B cell (primary cell): ENCODE measurements at regions of chr7 and their contacts with region 1.

Region 1: DNA sequence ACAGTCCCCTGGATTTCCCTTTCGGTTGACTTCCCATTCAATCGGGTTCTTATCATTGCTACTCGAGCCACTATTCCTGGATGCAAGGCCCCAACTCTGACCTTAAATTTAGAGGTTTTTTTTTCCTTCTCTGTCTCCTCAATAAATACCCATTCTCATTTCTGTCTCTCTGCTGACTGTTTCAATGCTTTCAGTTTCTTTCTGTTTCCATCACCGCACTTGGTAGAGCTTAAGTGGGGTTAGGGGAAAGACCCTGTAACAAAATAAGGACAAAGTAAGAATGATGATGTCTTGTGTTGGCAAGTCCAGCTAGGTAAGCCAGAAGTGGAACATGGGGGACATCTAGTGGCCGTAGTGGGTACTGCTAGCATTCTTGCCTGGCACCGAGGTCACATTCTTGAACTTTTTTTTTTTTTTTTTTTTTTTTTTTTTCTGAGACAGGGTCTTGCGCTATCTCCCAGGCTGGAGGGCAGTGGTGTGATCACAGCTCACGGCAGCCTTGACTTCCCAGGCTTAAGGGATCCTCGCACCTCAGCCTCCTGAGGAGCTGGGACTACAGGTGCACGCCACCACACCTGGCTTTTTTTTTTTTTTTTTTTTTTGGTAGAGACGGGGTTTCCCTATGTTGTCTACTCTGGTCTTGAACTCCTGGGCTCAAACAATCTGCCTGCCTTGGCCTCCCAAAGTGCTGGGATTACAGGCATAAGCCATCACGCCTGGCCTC is 40.3 kb downstream of the ZC3HC1 start:
- DNase-seq: peak; percentile 91
- ATAC-seq: peak; percentile 97
- H3K4me3 ChIP-seq: no peak overlapping the region
- H3K4me3 Mint-ChIP-seq: no peak overlapping the region
- H3K27ac ChIP-seq: no peak overlapping the region
- H3K27ac Mint-ChIP-seq: peak overlapping the region; percentile 34
- H3K4me1 ChIP-seq: peaks cover 0 to 6% of the 10 kb centered on the region in 2 donors
- H3K4me1 Mint-ChIP-seq: peaks cover 6% of the 10 kb centered on the region
- H3K27me3 ChIP-seq: no peaks in the 10 kb centered on the region
- H3K27me3 Mint-ChIP-seq: no peaks in the 10 kb centered on the region
- CTCF ChIP-seq: peak; percentile 86

Region 2: DNA sequence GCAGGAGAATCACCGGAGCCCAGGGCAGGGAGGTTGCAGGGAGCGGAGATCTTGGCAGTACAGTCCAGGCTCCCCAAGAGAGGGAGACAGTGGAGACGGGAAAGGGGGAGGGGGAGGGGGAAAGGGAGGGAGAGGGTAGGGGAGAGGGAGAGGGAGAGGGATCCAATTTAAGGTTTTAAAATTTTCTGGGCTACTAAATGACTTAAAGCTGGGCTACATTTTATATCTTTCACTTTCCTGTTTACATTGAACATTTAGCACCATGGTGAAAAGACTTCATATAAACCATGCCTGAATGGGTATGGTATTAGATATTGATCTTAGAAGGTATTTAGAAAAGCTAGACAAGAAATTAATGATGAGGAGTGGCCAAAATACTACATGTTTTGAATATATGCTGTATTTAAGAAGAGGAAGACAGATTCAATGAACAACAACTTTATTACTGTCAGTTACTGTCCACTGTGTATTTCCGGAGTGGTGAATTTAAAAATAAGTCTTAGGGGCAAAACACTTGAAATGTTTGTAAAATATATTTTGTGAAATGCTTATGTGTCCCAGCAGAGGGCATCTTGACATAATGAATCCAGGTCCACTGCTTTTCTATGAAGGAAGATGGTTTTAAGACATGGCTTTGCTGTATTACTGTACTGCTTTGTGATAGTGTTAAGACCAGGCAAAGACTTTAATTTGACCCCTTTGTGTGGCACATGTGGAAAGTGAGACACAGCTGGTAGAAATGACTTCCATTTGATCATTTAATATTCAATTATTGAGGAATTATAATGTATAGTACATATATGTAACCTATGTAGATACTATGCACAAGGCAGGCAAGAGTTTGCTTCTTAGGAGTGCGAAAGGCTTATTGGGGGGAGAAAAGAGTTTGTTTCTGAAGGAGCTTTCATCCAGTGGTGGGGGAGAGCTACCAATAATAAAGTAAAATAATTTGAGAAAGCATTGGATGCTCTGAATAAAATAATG is 346.5 kb before region 1 on chr7:
- CTCF ChIA-PET with region 1: no interaction called
- POLR2A ChIA-PET with region 1: no interaction called
- intact Hi-C with region 1: loop called (anchors 10 kb)
- DNase-seq: peak; percentile 12
- ATAC-seq: peak; percentile 21
- H3K4me3 ChIP-seq: no peak overlapping the region
- H3K4me3 Mint-ChIP-seq: no peak overlapping the region
- H3K27ac ChIP-seq: no peak overlapping the region
- H3K27ac Mint-ChIP-seq: no peak overlapping the region
- H3K4me1 ChIP-seq: no peaks in the 10 kb centered on the region
- H3K4me1 Mint-ChIP-seq: peaks cover 4% of the 10 kb centered on the region
- H3K27me3 ChIP-seq: no peaks in the 10 kb centered on the region
- H3K27me3 Mint-ChIP-seq: no peaks in the 10 kb centered on the region
- CTCF ChIP-seq: peak; percentile 37

Region 3: DNA sequence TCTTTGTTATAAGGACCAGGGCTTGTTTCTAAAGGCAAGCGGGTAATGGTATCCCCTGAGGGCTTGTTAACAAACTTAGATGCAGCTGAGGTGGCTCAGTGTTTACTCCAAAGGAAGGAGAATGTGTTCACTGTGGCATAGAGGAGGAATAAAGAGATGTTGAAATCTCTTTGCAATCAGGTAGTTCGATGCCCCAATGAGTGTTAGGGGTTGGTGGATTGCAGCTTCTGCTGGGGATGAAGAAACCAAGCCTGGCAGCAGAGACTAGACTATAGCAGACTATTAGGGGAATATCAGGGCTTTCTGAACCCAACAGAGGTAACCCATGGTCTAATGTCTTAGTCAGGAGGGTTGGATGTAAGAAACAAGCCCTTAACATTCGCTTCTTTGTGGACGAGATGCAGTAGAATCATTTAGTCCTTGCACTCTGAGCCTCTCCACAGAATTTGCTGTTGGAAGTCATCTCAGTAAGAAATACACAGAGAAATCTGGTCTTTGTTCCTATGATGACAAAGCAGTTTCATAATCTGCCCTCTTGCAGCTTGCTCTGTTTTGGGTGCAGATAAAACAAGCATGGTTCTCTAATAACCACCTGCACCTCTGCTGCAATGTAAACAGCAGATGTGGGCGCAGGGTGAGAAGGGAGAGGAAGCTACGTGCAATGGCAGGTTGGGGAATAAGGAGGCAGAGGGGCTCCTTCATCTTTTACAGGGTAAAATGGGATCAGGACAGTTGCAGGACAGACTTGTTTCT is 290.7 kb before region 1 on chr7:
- CTCF ChIA-PET with region 1: no interaction called
- POLR2A ChIA-PET with region 1: no interaction called
- intact Hi-C with region 1: loop called (anchors 10 kb)
- DNase-seq: no peak
- ATAC-seq: no peak
- H3K4me3 ChIP-seq: no peak overlapping the region
- H3K4me3 Mint-ChIP-seq: no peak overlapping the region
- H3K27ac ChIP-seq: no peak overlapping the region
- H3K27ac Mint-ChIP-seq: no peak overlapping the region
- H3K4me1 ChIP-seq: no peaks in the 10 kb centered on the region
- H3K4me1 Mint-ChIP-seq: no peaks in the 10 kb centered on the region
- H3K27me3 ChIP-seq: no peaks in the 10 kb centered on the region
- H3K27me3 Mint-ChIP-seq: no peaks in the 10 kb centered on the region
- CTCF ChIP-seq: no peak

Region 4: GRCh38 chr7:129933627-129934026 is 77.2 kb before region 1 on chr7:
- CTCF ChIA-PET with region 1: interaction called, 10 read pairs
- POLR2A ChIA-PET with region 1: no interaction called
- intact Hi-C with region 1: loop called (anchors 2 kb)
- DNase-seq: no peak
- ATAC-seq: no peak
- H3K4me3 ChIP-seq: no peak overlapping the region
- H3K4me3 Mint-ChIP-seq: no peak overlapping the region
- H3K27ac ChIP-seq: peak overlapping the region in 1 of 2 donors; percentile 72
- H3K27ac Mint-ChIP-seq: no peak overlapping the region
- H3K4me1 ChIP-seq: peaks cover 16 to 17% of the 10 kb centered on the region in 2 donors
- H3K4me1 Mint-ChIP-seq: peaks cover 18% of the 10 kb centered on the region
- H3K27me3 ChIP-seq: no peaks in the 10 kb centered on the region
- H3K27me3 Mint-ChIP-seq: no peaks in the 10 kb centered on the region
- CTCF ChIP-seq: no peak